SK-N-SH (cell line): ENCODE measurements at regions of chr15 and their contacts with region 1.

Region 1: DNA sequence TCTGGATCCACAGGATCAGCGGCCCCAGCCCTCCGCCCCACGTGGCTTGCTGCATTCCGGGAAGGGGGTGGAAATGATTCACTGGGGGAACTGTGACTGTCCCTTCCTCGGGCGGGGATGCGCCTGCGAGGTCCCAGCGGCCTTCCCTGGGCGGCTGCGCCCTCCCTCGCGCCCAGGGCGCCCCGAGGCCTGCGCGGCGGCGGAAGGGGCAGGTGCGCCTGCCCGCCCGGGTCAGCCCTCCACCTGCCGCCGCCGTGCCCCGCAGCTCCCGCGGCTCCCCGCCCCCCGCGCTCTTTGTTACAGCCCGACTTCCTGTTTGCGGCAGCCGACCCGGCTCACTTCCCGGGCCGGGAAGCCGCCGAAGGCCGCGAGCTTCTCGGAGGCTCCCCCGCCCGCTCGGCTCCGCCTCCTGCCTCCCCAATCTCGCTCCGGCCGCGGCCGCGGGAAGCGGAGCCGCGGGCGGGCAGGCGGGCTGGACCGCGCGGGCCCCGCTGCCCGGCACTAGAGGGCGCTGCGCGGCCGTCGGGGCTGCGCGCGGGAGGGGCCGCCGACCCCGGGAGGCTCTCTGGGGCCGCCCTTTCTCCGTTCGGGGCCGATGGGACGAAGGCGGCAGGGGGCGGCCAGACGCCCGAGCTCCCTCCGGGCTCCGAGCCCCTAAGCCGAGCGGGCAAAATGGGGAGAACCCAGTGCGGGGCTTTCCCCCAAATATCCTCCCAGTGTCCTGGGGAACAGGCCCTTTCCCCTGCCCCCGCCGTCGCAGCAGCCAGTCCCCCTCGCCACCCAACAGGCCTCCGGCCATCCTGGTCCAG is 11.5 kb upstream of the CHAC1 start:
- DNase-seq: peak; percentile 97
- H3K4me3 ChIP-seq: peak overlapping the region; percentile 56 to 60
- H3K27ac ChIP-seq: peak overlapping the region; percentile 33 to 85; a peak in 3 of 4 replicates
- H3K4me1 ChIP-seq: peaks cover 7 to 26% of the 10 kb centered on the region in 2 experiments; a peak in 2 of 4 replicates
- H3K27me3 ChIP-seq: no peaks in the 10 kb centered on the region
- CTCF ChIP-seq: peak; percentile 49
- EP300 ChIP-seq: no peak
- RAD21 ChIP-seq: peak; percentile 50

Region 2: DNA sequence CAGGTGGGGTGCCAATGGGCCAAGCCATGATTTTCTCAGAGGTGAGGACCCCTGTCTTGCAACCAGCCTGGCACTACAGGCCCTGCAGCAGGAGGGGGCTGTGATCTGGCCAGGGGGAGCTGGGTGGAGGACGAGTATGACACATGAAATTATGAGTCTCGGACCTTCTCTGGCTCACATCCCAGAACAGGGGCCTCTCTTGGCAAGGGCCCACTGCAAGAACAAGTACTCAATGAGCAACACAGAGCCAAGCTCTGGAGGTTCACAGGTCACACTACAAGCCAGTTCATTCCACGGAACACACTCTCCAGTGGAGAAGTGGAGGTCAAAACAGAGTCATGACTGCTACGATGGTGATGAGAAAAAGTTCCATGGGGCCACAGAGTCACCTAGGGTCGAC is 405.2 kb before region 1 on chr15:
- CTCF ChIA-PET with region 1: no interaction called
- POLR2A ChIA-PET with region 1: no interaction called
- DNase-seq: no peak
- H3K4me3 ChIP-seq: no peak overlapping the region
- H3K27ac ChIP-seq: no peak overlapping the region
- H3K4me1 ChIP-seq: peaks cover 0 to 4% of the 10 kb centered on the region in 2 experiments; a peak in 2 of 4 replicates
- H3K27me3 ChIP-seq: no peaks in the 10 kb centered on the region
- CTCF ChIP-seq: no peak
- EP300 ChIP-seq: no peak
- RAD21 ChIP-seq: no peak

Region 3: DNA sequence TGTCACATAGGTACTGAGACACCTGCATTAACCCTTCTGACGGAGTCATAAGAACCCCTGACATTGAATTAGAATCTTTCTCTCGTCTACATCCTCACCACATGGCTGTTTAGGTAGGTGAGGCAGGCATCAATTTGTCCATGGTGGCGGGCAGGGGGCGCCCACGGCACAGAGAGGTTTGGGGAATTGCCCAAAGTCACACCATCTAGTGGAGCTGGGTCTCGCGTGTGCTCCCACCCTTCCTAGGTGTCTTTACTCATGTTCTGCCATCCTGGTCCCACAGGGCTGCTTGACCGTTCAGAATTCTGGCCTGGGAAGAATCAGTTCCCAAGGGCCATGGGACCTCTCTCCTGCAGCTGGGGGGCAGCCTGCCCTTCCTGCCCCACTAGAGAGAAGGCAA is 27.2 kb before region 1 on chr15:
- CTCF ChIA-PET with region 1: interaction called, 675 read pairs
- POLR2A ChIA-PET with region 1: interaction called, 4 read pairs
- DNase-seq: no peak
- H3K4me3 ChIP-seq: no peak overlapping the region
- H3K27ac ChIP-seq: no peak overlapping the region
- H3K4me1 ChIP-seq: peaks cover 0 to 20% of the 10 kb centered on the region in 2 experiments; a peak in 1 of 4 replicates
- H3K27me3 ChIP-seq: no peaks in the 10 kb centered on the region
- CTCF ChIP-seq: no peak
- EP300 ChIP-seq: no peak
- RAD21 ChIP-seq: 0 out of 2 replicates have a peak, but pooled peaks have one; percentile 10

Region 4: DNA sequence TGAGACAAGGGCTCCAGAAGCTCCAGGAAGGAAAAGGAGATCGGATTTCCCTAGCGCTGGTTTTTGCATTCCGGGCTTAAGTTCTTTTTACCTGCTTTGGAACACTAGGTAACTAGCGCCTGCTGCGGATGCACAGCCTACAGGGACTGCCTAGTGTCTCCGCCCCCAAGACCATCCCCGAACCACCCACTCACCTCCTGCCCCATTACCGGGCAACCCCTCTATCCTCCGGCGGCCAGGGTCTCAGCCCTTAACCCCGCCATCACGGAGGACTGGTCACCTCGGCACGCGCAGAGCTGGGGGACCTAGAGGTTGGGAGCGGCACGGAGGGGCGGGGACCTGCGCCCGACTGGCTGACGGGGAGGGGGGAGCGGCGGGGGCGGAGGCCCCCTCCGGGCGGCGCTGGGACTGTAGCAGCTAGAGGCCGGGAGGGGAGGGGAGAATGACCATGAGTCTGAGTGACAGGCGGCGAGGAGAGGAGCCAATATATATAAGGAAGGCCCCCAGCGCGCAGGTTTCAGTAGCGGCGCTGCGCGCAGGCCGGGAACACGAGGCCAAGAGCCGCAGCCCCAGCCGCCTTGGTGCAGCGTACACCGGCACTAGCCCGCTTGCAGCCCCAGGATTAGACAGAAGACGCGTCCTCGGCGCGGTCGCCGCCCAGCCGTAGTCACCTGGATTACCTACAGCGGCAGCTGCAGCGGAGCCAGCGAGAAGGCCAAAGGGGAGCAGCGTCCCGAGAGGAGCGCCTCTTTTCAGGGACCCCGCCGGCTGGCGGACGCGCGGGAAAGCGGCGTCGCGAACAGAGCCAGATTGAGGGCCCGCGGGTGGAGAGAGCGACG is 12.7 kb before region 1 on chr15 and contains the start of gene DLL4:
- CTCF ChIA-PET with region 1: interaction called, 109 read pairs
- POLR2A ChIA-PET with region 1: interaction called, 5 read pairs
- DNase-seq: peak; percentile 80
- H3K4me3 ChIP-seq: peak within 1 kb of the TSS; percentile 46 to 60
- H3K27ac ChIP-seq: no peak within 1 kb of the TSS
- H3K4me1 ChIP-seq: peaks cover 17 to 44% of the 10 kb centered on the region in 2 experiments; a peak in 2 of 4 replicates
- H3K27me3 ChIP-seq: peaks cover 53% of the 10 kb centered on the region
- CTCF ChIP-seq: no peak
- EP300 ChIP-seq: no peak
- RAD21 ChIP-seq: no peak
- polyA plus RNA-seq, gene DLL4: 0.03 TPM in 2 replicates

Region 5: DNA sequence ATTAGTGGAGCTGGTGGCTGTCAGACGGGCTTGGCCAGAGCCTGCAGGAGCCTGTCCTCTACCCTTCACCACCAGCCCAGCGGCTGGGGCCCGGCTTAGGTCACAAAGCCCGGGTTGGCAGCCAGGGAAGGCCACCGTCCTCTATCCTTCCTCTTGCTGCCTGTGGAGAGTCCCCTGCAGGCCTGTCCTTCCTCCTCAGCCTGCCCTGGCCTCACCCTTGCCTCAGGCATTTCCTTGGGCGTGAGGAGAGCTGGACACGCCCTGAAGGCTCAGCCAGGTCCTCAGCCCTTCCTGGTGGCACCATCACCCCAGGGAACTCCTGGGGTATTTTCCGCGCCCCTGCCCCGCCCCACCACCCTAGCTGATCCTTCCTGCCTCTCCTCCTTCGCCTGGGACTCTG is 19.2 kb after region 1 on chr15:
- CTCF ChIA-PET with region 1: interaction called, 17 read pairs
- POLR2A ChIA-PET with region 1: no interaction called
- DNase-seq: no peak
- H3K4me3 ChIP-seq: no peak overlapping the region
- H3K27ac ChIP-seq: no peak overlapping the region
- H3K4me1 ChIP-seq: peaks cover 9 to 30% of the 10 kb centered on the region in 2 experiments; a peak in 3 of 4 replicates
- H3K27me3 ChIP-seq: no peaks in the 10 kb centered on the region
- CTCF ChIP-seq: no peak
- EP300 ChIP-seq: no peak
- RAD21 ChIP-seq: no peak

Region 6: DNA sequence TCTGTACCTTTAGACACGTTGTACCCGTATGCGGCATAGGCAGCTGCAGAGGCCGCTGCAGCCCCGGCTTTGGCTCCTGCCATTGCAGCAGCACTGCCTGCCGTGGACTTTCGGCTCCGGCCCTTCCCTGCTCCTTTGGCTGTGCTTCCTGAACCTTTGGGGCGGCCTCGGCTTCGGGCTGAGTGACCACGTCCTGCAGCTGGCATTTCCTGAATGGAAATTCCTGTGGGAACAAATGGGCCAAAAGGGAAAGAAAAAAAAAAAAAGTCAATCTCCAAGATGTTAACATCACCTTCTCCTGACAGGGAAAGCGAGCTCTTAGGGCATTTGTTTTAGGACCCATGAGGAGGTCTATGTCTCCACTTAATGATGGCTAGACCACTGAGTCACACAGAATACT is 41.1 kb after region 1 on chr15:
- CTCF ChIA-PET with region 1: interaction called, 12 read pairs
- POLR2A ChIA-PET with region 1: no interaction called
- DNase-seq: no peak
- H3K4me3 ChIP-seq: peak overlapping the region in 1 of 2 experiments; percentile 3; a peak in 1 of 4 replicates
- H3K27ac ChIP-seq: peak overlapping the region; percentile 67 to 91
- H3K4me1 ChIP-seq: peaks cover 0 to 38% of the 10 kb centered on the region in 2 experiments; a peak in 2 of 4 replicates
- H3K27me3 ChIP-seq: no peaks in the 10 kb centered on the region
- CTCF ChIP-seq: no peak
- EP300 ChIP-seq: 0 out of 4 replicates have a peak, but pooled peaks of 1 of the 2 experiments have one; percentile 41
- RAD21 ChIP-seq: no peak

Region 7: DNA sequence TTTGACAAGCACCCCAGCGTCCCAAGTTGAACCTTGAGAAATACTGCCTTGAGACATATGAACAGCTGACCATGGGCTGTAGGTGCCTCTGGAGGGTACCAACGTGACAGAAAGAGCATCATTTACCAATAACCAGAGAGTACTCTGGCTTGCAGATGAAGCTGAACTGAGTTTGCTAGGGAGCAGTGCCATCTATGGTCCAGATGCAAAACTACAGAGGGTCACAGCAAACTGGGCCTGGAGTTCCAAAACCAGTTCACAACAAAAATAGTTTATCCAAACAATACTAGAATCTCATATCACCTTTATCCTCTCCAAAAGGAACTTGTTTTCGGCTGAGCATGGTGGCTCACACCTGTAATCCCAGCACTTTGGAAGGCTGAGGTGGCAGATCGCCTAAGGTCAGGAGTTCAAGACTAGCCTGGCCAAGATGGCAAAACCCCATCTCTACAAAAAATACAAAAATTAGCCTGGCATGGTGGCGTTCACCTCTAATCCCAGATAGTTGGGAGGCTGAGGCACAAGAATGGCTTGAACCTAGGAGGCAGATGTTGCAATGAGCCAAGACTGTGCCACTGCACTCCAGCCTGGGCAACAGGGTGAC is 80.9 kb after region 1 on chr15:
- CTCF ChIA-PET with region 1: interaction called, 26 read pairs
- POLR2A ChIA-PET with region 1: no interaction called
- DNase-seq: peak; percentile 61
- H3K4me3 ChIP-seq: no peak overlapping the region; a peak in 1 of 4 replicates
- H3K27ac ChIP-seq: no peak overlapping the region
- H3K4me1 ChIP-seq: peaks cover 2 to 23% of the 10 kb centered on the region in 2 experiments; a peak in 3 of 4 replicates
- H3K27me3 ChIP-seq: no peaks in the 10 kb centered on the region
- CTCF ChIP-seq: peak; percentile 83
- EP300 ChIP-seq: no peak
- RAD21 ChIP-seq: peak; percentile 91